ENCODE measurements at regions of chr15 and their contacts with region 1.

Region 1: DNA sequence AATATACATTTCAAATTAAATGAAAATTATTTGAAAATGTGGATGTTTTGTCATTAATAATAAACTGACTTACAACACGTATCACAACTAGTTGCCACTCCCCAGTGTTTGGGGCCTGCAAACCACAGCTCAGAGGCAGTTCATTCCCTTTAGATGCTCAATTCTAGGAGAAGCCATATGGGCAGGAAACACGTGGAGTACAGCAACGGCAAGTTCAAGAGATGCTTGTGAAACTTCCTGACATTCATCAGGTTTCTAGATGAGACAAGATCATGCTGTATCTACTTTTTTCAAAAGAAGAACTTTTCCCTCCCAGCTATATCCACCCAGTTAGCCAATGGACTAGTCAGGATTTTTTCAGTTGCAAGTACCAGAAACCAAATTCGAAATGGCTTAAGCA is 17.6 kb upstream of the PLA2G4D start:
- DNase-seq: no peak
- H3K4me3 ChIP-seq: no peak overlapping the region
- H3K27ac ChIP-seq: no peak overlapping the region
- H3K4me1 ChIP-seq: no peaks in the 10 kb centered on the region
- H3K27me3 ChIP-seq: no peaks in the 10 kb centered on the region
- CTCF ChIP-seq: no peak
- EP300 ChIP-seq: no peak
- POLR2A ChIP-seq: no peak

Region 2: GRCh38 chr15:40714214-40714613 is 1397.7 kb before region 1 on chr15:
- intact Hi-C with region 1: loop called in 1 of 4 experiments (anchors 5 kb)
- DNase-seq: no peak
- H3K4me3 ChIP-seq: no peak overlapping the region
- H3K27ac ChIP-seq: no peak overlapping the region
- H3K4me1 ChIP-seq: no peaks in the 10 kb centered on the region
- H3K27me3 ChIP-seq: no peaks in the 10 kb centered on the region
- CTCF ChIP-seq: no peak
- EP300 ChIP-seq: no peak
- POLR2A ChIP-seq: no peak

Region 3: GRCh38 chr15:42138968-42139386 is 27.1 kb after region 1 on chr15:
- intact Hi-C with region 1: no loop called
- DNase-seq: peak in 1 of 5 donors; percentile 2
- H3K4me3 ChIP-seq: no peak overlapping the region
- H3K27ac ChIP-seq: no peak overlapping the region
- H3K4me1 ChIP-seq: no peaks in the 10 kb centered on the region
- H3K27me3 ChIP-seq: no peaks in the 10 kb centered on the region
- CTCF ChIP-seq: no peak
- EP300 ChIP-seq: no peak
- POLR2A ChIP-seq: no peak

Measured in ovary (tissue), 10 donors.